Aorta (tissue), 5 donors: ENCODE measurements at regions of chr3 and their contacts with region 1.

Region 1: GRCh38 chr3:9430733-9431132 is 33.3 kb downstream of the SETD5 start:
- DNase-seq: no peak
- ATAC-seq: no peak
- H3K4me3 ChIP-seq: no peak overlapping the region
- H3K27ac ChIP-seq: no peak overlapping the region
- H3K4me1 ChIP-seq: no peaks in the 10 kb centered on the region
- H3K27me3 ChIP-seq: no peaks in the 10 kb centered on the region

Region 2: DNA sequence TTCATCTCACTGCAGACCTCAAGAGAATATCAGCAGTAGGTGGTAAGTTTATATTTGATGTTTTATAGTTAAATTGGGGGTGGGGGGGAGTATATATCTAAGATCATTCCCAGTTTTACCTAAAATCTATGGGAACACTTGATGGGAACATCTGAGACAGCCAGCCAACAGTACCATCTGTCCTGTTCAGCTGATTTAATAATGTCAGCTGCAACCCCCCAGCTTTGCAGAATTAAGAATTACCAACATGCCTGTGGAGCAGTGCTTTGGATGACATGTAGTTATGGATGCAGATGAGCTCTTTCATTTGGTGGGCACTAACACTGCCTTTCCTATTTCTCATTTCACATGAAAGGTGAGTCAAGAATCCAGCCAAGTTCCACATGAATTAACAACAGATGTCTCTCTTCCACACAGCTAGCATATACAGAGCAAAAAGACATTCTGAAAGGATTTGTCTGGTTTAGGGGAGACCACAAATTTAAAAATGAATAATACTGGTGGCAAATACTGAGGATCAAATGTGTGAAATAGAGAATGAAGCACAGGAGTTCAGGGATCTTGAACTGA is 42.8 kb after region 1 on chr3:
- intact Hi-C with region 1: loop called in 1 of 2 experiments (anchors 5 kb)
- DNase-seq: no peak
- ATAC-seq: no peak
- H3K4me3 ChIP-seq: no peak overlapping the region
- H3K27ac ChIP-seq: no peak overlapping the region
- H3K4me1 ChIP-seq: no peaks in the 10 kb centered on the region
- H3K27me3 ChIP-seq: no peaks in the 10 kb centered on the region